PC-9 (cell line): ENCODE measurements at regions of chr20 and their contacts with region 1.

Region 1: DNA sequence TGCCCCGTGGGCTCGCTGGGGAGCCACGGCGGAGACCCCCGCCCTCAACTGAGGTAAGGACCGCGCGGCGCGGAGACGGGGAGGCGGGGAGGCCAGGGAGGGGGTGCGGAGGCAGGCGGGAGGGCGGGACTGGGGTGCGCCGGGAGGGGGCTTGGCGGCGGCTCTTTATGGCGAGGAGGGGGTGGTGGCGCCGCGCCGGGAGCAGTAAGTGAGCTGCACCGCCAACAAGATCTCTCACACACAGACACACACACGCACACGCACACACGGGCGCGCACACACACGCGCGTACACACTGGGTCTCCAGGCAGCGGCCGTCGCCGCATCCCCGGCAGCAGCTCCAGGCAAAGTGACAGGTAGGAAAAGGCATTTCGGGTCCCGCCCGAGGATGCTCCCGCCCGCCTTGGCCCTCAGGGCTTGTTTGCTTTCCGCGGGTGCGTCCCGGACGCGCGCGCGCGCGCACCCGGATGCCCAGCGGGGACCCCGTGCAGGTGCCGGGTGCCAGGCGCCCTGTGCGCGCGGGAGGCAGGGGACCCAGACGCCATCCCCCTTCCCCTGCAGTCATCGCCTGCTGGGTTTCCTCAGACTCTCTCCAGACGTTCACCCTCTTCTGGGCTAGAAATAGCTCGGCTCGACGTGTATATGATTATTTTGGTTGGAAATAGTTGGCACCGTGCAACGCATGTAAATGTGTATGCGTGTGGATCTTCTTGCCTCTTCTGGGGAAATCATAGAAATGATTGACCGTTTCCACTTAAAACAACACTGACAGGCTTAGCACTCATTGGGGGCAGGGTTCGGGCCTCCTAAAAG is at the start of gene PLCB4:
- DNase-seq: peak; percentile 76 to 84
- H3K4me3 ChIP-seq: peak within 1 kb of the TSS; percentile 67
- H3K27ac ChIP-seq: peak within 1 kb of the TSS; percentile 25; the same call in 1 of the 2 replicates
- H3K4me1 ChIP-seq: peaks cover 19% of the 10 kb centered on the region
- H3K27me3 ChIP-seq: no peaks in the 10 kb centered on the region
- CTCF ChIP-seq: no peak
- total RNA-seq, gene PLCB4: 14.9 and 18.6 TPM in 2 replicates

Region 2: DNA sequence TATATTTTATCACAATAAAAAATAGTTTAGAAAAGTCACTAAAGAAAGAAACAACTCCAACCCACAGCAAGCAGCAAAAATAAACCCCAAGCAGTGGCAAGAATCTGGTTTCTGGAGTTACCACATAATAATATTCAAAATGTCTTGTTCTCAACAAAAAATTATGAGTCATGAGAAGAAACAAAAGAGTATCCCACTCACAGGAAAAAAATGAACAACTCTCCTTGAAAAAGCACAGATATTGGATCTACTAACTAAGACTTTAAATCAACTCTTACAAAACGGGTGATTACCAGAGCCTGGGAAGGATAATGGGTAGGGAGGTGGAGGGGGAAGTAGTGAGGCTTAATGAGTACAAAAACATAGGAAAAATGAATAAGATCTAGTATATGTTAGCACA is 511.3 kb before region 1 on chr20:
- CTCF ChIA-PET with region 1: no interaction called
- POLR2A ChIA-PET with region 1: no interaction called
- intact Hi-C with region 1: no loop called
- DNase-seq: no peak
- H3K4me3 ChIP-seq: no peak overlapping the region
- H3K27ac ChIP-seq: no peak overlapping the region
- H3K4me1 ChIP-seq: no peaks in the 10 kb centered on the region
- H3K27me3 ChIP-seq: no peaks in the 10 kb centered on the region
- CTCF ChIP-seq: no peak

Region 3: DNA sequence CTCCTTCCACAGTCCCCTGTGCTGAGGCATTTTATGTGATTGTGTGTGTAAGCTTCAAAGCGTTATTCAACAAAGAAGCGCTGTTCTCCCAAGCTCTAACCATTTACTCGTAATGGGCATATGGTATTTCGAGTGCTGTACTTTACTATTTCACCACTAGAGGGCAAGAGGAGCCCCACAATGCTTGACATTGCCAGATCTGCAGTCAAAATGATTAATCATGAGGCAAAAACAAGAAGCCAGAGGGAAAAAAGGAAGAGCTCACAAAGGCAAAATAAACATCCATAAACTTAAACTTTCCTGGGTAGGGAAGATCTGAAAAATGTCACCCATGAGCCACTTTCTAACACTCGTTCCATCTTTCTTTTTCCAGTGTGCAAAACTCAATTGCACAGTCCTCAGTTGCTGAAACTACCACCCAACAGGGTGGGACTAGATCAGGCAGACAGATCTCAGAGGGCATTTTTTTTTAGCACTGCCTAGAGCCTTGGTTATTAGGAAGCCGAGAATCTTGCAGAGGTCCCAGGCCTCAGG is 215.2 kb before region 1 on chr20:
- CTCF ChIA-PET with region 1: no interaction called
- POLR2A ChIA-PET with region 1: no interaction called
- intact Hi-C with region 1: loop called (anchors 2 kb)
- DNase-seq: peak; percentile 24 to 39
- H3K4me3 ChIP-seq: no peak overlapping the region
- H3K27ac ChIP-seq: no peak overlapping the region
- H3K4me1 ChIP-seq: no peaks in the 10 kb centered on the region
- H3K27me3 ChIP-seq: no peaks in the 10 kb centered on the region
- CTCF ChIP-seq: peak; percentile 92

Region 4: DNA sequence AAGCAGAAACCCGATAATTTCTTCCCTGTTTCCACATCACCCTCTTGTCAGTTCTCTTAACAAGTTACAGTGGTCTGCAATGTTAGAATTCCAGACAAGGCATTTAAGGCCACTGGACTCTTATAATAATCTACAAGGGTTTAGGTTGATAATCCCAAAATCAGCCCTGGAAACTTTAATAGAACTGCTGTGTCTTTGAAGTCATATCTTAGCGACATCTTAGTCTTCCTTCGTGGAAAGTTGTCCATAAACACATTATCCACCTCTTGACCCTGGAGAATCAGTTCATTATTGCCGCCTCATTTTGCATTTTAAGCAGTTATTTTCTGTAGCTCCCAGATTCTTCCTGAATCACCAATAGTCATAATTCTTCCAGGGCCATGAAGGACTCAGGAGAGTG is 108.8 kb before region 1 on chr20:
- CTCF ChIA-PET with region 1: no interaction called
- POLR2A ChIA-PET with region 1: interaction called, 20 read pairs
- intact Hi-C with region 1: no loop called
- DNase-seq: no peak
- H3K4me3 ChIP-seq: no peak overlapping the region
- H3K27ac ChIP-seq: no peak overlapping the region
- H3K4me1 ChIP-seq: no peaks in the 10 kb centered on the region
- H3K27me3 ChIP-seq: no peaks in the 10 kb centered on the region
- CTCF ChIP-seq: no peak

Region 5: DNA sequence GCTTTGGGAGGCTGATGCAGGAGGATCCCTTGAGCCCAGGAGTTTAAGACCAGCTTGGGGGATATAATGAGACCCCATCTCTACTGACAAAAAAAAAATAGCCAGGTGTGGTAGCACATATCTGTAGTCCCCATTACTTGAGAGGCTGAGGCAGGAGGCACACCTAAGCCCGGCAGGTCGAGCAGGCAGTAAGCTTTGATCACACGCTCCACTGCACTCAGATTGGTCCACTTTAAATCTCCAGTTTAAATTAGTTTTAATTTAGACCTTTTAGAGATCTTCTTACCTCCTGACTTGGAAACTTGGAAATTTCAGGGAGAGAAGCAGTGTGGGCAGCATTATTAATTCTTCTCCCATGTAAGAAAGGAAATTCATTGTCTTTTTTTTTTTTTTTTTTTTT is 16.9 kb before region 1 on chr20:
- CTCF ChIA-PET with region 1: interaction called, 3 read pairs
- POLR2A ChIA-PET with region 1: no interaction called
- intact Hi-C with region 1: loop called (anchors 1 kb)
- DNase-seq: peak in 1 of 2 experiments; percentile 28
- H3K4me3 ChIP-seq: peak overlapping the region; percentile 40; the same call in 1 of the 2 replicates
- H3K27ac ChIP-seq: peak overlapping the region; percentile 96
- H3K4me1 ChIP-seq: peaks cover 31% of the 10 kb centered on the region
- H3K27me3 ChIP-seq: no peaks in the 10 kb centered on the region
- CTCF ChIP-seq: no peak

Region 6: GRCh38 chr20:9359561-9360308 is 290.7 kb after region 1 on chr20:
- CTCF ChIA-PET with region 1: no interaction called
- POLR2A ChIA-PET with region 1: no interaction called
- intact Hi-C with region 1: loop called (anchors 2 kb)
- DNase-seq: peak; percentile 37 to 39
- H3K4me3 ChIP-seq: no peak overlapping the region
- H3K27ac ChIP-seq: no peak overlapping the region
- H3K4me1 ChIP-seq: no peaks in the 10 kb centered on the region
- H3K27me3 ChIP-seq: no peaks in the 10 kb centered on the region
- CTCF ChIP-seq: peak; percentile 75

Region 7: DNA sequence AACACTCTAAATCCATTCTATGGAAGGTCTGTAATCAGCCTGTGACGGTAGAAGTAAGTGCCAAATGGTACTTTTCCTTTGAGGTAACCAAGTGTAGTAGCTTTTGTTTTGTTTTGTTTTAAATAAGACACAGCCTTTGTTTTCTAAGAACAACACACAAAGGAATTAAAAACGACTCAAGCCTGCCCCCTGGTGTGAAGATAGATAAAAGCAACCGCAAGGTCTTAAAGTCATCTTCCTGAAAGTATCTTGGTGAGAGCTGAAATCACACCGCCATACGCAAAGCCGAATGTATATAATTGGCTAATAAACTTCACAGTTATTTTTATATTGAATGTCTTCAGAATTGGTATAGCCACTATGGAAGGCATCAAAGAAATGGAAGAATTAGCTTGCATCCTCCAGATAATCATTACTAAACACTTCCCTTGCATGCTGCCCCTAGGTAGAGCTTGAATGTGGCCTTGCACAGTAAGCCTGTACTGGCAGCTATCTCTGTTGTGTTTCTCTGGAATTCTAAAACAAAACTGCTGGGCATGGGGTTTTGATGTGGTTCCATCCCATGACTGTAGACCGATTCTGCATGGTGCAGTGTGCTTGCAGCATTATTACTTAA is 540.9 kb after region 1 on chr20:
- CTCF ChIA-PET with region 1: interaction called, 10 read pairs
- POLR2A ChIA-PET with region 1: no interaction called
- intact Hi-C with region 1: no loop called
- DNase-seq: peak in 1 of 2 experiments; percentile 58
- H3K4me3 ChIP-seq: no peak overlapping the region
- H3K27ac ChIP-seq: no peak overlapping the region
- H3K4me1 ChIP-seq: no peaks in the 10 kb centered on the region
- H3K27me3 ChIP-seq: no peaks in the 10 kb centered on the region
- CTCF ChIP-seq: peak; percentile 88